HCT116 (cell line): ENCODE measurements at regions of chr21 and their contacts with region 1.

Region 1: DNA sequence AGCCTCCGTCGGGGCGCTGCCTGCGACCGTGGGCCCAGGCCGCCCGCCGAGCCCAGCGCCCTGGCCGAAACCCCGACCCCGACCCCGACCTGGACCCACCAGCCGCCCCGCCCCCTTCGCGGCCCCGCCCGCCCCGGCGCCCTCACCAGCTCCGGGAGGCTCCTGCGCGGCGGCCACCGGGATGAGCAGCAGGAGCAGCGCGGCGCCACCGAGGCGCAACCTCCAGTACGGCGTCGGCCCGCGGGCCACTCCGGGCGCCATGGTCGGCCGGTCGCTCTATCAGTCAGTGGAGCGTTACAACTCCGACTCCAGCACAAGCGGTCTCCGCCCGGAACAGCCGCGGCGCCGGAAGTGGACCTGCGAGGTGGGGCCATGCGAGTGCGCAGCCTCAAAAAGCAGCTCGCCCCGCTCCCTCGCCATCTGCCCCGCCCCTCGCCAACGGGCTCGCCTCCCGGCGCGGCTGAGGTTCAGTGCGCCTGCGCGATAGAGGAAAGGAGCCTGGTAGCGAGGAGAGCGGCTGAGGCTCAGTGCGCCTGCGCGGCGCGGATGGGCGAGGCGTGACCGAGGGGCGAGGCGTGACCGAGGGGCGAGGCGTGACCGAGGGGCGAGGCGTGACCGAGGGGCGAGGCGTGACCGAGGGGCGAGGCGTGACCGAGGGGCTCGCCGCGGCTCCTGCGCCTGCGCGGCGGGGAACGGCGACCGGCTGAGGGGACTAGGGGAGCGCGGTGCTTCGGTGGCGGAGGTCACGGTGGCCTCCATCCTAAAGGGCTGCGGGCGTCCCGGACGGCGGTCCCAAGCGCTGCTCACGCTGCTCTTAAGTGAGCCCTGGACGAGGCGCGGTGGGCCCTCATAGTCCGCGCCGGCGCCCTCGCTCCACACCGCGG is at the start of gene PTTG1IP:
- DNase-seq: peak; percentile 86
- ATAC-seq: peak; percentile 77
- H3K4me3 ChIP-seq: peak within 1 kb of the TSS; percentile 84
- H3K27ac ChIP-seq: peak within 1 kb of the TSS; percentile 69
- H3K4me1 ChIP-seq: peaks cover 36 to 48% of the 10 kb centered on the region in 2 experiments
- H3K27me3 ChIP-seq: no peaks in the 10 kb centered on the region
- CTCF ChIP-seq: no peak
- POLR2A ChIP-seq: peak; percentile 50
- RAD21 ChIP-seq: no peak
- total RNA-seq, gene PTTG1IP: 83.4 TPM

Region 2: GRCh38 chr21:44779417-44780136 is 94.0 kb before region 1 on chr21:
- CTCF ChIA-PET with region 1: no interaction called
- POLR2A ChIA-PET with region 1: no interaction called
- RAD21 ChIA-PET with region 1: no interaction called
- intact Hi-C with region 1: loop called (anchors 5 kb)
- DNase-seq: no peak
- ATAC-seq: peak; percentile 55; the same call in 1 of the 2 replicates
- H3K4me3 ChIP-seq: no peak overlapping the region
- H3K27ac ChIP-seq: no peak overlapping the region
- H3K4me1 ChIP-seq: peaks cover 23 to 27% of the 10 kb centered on the region in 2 experiments
- H3K27me3 ChIP-seq: no peaks in the 10 kb centered on the region
- CTCF ChIP-seq: no peak
- POLR2A ChIP-seq: no peak
- RAD21 ChIP-seq: no peak

Region 3: GRCh38 chr21:44892536-44893277 is 19.1 kb after region 1 on chr21:
- CTCF ChIA-PET with region 1: interaction called, 10 read pairs
- POLR2A ChIA-PET with region 1: no interaction called
- RAD21 ChIA-PET with region 1: interaction called in 1 of 2 experiments, 3 read pairs
- intact Hi-C with region 1: no loop called
- DNase-seq: peak; percentile 26
- ATAC-seq: peak; percentile 89
- H3K4me3 ChIP-seq: no peak overlapping the region
- H3K27ac ChIP-seq: no peak overlapping the region
- H3K4me1 ChIP-seq: no peaks in the 10 kb centered on the region; a peak in 1 of 4 replicates
- H3K27me3 ChIP-seq: no peaks in the 10 kb centered on the region
- CTCF ChIP-seq: peak; percentile 76 to 94 (median 90)
- POLR2A ChIP-seq: no peak
- RAD21 ChIP-seq: peak; percentile 77

Region 4: DNA sequence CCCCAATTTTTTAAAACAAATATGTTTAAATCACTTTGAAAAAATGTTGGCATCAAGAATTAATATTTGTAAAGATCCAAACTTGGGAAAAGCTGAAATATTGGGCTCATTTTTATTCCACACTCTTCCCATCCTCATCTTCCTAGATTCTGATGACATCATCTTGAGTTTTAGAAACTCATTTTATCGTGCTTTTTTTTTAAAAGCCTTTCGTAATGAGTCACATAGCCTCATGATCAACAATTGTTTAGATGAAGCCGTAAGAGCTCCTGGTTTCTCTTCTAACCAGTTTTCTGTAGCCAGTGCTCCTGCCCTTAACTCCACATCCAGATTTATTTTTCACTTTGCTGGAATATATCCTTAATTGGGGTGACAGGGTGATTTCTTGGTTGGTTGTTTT is 335.4 kb after region 1 on chr21:
- CTCF ChIA-PET with region 1: no interaction called
- POLR2A ChIA-PET with region 1: no interaction called
- RAD21 ChIA-PET with region 1: no interaction called
- intact Hi-C with region 1: no loop called
- DNase-seq: no peak
- ATAC-seq: no peak
- H3K4me3 ChIP-seq: no peak overlapping the region
- H3K27ac ChIP-seq: no peak overlapping the region
- H3K4me1 ChIP-seq: no peaks in the 10 kb centered on the region
- H3K27me3 ChIP-seq: no peaks in the 10 kb centered on the region
- CTCF ChIP-seq: no peak
- POLR2A ChIP-seq: no peak
- RAD21 ChIP-seq: no peak

Region 5: GRCh38 chr21:45294509-45295291 is 421.1 kb after region 1 on chr21:
- CTCF ChIA-PET with region 1: no interaction called
- POLR2A ChIA-PET with region 1: no interaction called
- RAD21 ChIA-PET with region 1: no interaction called
- intact Hi-C with region 1: no loop called
- DNase-seq: no peak
- ATAC-seq: no peak
- H3K4me3 ChIP-seq: no peak overlapping the region
- H3K27ac ChIP-seq: no peak overlapping the region
- H3K4me1 ChIP-seq: peaks cover 8 to 17% of the 10 kb centered on the region in 2 experiments
- H3K27me3 ChIP-seq: no peaks in the 10 kb centered on the region
- CTCF ChIP-seq: no peak
- POLR2A ChIP-seq: no peak
- RAD21 ChIP-seq: no peak